Panc1 (cell line): ENCODE measurements at regions of chr5 and their contacts with region 1.

Region 1: GRCh38 chr5:134637161-134637582 is 4.5 kb upstream of the SAR1B start:
- DNase-seq: no peak
- ATAC-seq: no peak
- H3K4me3 ChIP-seq: no peak overlapping the region
- H3K27ac ChIP-seq: no peak overlapping the region
- H3K4me1 ChIP-seq: no peaks in the 10 kb centered on the region
- H3K27me3 ChIP-seq: no peaks in the 10 kb centered on the region
- CTCF ChIP-seq: no peak

Region 2: DNA sequence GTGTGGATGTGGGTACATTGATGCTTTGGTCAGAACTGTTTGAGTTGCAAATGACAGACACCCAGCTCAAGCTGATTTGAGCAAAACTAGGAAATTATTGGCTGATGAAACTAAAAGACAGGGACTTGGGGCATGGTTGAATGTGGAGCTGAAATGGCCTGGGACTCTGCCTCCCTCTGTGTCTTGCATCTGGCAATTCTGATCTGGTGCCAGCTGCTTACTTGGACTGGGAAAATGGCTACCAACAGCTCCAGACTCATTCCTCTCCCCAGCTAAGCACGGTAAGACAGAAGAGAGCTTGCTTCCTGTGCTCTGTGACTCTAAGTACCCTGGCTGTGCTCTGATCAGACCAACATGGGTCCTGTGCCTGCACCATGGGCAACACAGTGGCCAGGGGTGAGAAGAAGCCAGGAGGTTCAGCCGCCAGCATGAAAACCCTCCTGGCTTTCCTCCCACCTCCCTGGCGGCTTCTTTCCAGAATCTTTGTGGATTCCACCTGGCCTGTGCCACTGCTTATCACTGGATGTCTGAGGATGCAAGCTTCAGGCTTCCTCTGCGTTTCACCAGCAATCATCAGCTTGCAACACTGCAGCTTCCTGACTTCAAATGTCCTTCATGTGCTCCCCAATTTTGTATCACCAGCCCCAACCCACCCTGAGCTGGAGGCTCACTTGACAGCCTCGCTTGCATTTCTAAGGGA is 712.8 kb before region 1 on chr5:
- CTCF ChIA-PET with region 1: no interaction called
- POLR2A ChIA-PET with region 1: no interaction called
- in situ Hi-C with region 1: no loop called
- intact Hi-C with region 1: no loop called
- DNase-seq: no peak
- ATAC-seq: 0 out of 2 replicates have a peak, but pooled peaks have one; percentile 52
- H3K4me3 ChIP-seq: no peak overlapping the region
- H3K27ac ChIP-seq: no peak overlapping the region
- H3K4me1 ChIP-seq: no peaks in the 10 kb centered on the region; the same call in 1 of the 2 replicates
- H3K27me3 ChIP-seq: peaks cover 4% of the 10 kb centered on the region; the same call in 1 of the 2 replicates
- CTCF ChIP-seq: no peak

Region 3: DNA sequence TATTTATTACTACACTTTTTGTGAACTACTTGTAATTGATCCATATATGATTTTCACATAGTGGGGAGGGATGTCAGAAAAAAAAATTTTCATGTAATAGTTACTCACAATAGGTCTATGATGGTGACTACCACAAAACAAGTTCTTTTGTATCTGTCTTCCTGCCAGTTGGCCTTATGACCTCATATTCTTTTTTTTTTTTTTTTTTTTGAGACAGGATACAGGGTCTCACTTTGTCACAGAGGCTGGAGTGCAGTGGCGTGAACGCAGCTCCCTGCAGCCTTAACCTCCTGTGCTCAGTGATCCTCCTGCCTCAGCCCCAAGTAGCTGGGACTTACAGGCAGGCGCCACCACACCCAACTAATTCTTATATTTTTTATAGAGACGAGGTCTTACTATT is 22.3 kb after region 1 on chr5:
- CTCF ChIA-PET with region 1: no interaction called
- POLR2A ChIA-PET with region 1: interaction called, 13 read pairs
- in situ Hi-C with region 1: no loop called
- intact Hi-C with region 1: no loop called
- DNase-seq: no peak
- ATAC-seq: no peak
- H3K4me3 ChIP-seq: no peak overlapping the region
- H3K27ac ChIP-seq: no peak overlapping the region
- H3K4me1 ChIP-seq: no peaks in the 10 kb centered on the region
- H3K27me3 ChIP-seq: no peaks in the 10 kb centered on the region
- CTCF ChIP-seq: no peak

Region 4: GRCh38 chr5:134692722-134693121 is 55.5 kb after region 1 on chr5:
- CTCF ChIA-PET with region 1: no interaction called
- POLR2A ChIA-PET with region 1: no interaction called
- in situ Hi-C with region 1: no loop called
- intact Hi-C with region 1: no loop called
- DNase-seq: no peak
- ATAC-seq: no peak
- H3K4me3 ChIP-seq: no peak overlapping the region
- H3K27ac ChIP-seq: no peak overlapping the region
- H3K4me1 ChIP-seq: no peaks in the 10 kb centered on the region
- H3K27me3 ChIP-seq: no peaks in the 10 kb centered on the region
- CTCF ChIP-seq: no peak

Region 5: DNA sequence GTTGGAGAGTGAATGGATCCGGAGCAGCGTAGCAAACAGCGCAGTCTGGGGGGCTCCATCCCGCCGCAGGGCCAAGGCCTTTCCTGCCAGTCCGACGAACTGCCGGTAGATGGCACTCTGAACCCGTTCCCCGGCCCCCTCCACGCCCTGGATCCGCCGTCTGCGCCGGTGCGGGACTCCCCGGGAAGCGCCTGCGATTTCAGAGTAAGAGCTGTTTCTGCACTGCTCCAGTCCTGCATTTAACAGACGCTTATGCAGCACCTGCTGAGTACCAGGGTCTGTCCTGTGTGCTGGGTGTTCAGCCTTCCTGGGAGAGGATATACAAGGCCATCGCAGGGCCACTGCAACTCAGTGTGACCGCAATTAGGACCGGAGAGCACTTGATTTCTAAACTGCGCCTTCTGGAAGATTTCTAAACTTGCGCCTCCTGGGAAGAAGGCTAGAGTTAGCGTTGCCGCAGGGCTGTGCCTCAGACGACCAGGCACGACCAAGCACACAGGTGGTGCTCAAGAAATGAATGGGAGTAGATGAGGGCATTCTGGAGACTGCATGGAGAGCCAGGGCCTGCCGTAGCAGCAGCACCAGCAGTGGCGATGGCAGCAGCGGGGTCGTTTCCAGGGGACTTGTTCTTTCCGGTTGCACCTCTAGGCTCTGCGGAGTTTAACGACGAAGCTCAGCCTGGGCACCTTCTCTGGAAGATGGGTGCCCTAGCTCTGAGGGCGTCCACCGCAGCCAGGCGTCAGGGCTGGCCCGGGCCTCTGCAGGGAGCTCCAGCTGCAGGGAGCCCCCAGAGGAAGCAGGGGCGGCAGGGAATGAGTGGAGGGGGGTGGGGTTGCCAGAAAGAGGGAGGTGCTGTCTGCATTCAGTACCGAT is 829.2 kb after region 1 on chr5:
- CTCF ChIA-PET with region 1: no interaction called
- POLR2A ChIA-PET with region 1: no interaction called
- in situ Hi-C with region 1: no loop called
- intact Hi-C with region 1: no loop called
- DNase-seq: no peak
- ATAC-seq: peak; percentile 94
- H3K4me3 ChIP-seq: no peak overlapping the region
- H3K27ac ChIP-seq: no peak overlapping the region
- H3K4me1 ChIP-seq: peaks cover 2% of the 10 kb centered on the region; the same call in 1 of the 2 replicates
- H3K27me3 ChIP-seq: peaks cover 18% of the 10 kb centered on the region
- CTCF ChIP-seq: peak; percentile 95